Activated CD8-positive, alpha-beta T cell treated with anti-CD3 and anti-CD28 coated beads for 36 hours (primary cell): ENCODE measurements at regions of chr6 and their contacts with region 1.

Region 1: DNA sequence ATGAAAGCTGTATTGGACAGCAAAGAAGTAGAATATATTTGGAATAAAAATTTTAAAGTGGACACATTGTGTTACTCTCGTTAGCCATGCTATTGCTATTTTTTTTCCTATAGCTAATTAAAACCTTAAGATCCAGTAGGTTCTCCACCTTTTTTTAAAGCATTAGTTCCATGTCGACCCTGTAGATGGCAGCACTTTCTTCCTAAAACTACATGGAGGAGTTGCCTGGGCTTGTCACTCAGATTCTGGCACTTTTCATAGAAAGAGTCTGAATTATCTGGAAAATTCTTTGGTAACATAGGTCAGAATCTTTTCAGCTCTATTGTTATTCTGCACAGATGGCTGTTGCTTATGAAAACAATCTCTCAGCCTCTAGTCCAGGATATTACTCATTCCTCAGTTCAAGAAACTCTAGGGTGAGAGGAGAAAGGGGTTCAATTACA is 42.0 kb upstream of the ESR1 start:
- DNase-seq: peak; percentile 65
- ATAC-seq: peak; percentile 64
- H3K4me3 Mint-ChIP-seq: no peak overlapping the region
- H3K27ac Mint-ChIP-seq: no peak overlapping the region
- H3K4me1 Mint-ChIP-seq: peaks cover 10% of the 10 kb centered on the region
- H3K27me3 Mint-ChIP-seq: peaks cover 6% of the 10 kb centered on the region
- CTCF ChIP-seq: peak; percentile 63

Region 2: DNA sequence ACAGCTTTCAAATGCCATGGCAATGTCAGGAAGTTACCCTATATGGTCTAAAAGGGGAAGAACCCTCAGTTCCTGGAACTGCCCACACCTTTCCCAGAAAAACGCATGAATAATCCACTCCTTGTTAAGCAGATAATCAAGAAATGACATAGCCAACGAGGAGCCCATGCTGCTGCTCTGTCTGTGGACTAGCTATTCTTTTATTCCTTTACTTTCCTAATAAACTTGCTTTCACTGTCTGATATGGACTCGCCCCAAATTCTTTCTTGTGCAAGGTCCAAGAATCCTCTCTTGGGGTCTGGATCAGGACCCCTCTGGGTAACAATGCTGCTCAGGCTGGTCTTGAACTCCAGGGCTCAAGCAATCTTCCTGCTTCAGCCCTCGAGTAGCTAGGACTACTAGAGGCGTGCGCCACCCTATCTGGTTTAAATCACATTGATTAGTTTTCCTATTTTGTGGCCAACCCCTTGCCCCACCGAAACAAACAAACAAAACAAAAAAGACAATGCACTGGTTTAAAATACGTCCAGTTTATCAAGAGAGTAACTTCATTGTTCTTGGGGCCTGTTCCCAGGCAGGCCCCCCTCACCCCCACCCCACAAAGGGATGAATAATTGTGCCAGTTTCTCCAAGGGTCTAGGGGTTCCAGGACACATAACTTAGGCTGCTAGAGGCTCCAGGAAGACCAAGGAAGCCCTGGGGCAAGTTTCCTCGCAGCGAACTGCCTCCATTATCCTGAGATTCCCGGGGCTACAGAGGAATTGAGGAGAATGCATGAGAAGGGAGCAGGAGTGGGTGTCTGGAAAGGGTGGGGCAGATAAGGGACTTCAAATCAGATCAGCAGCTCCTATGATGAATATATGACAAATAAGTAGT is 535.8 kb before region 1 on chr6:
- CTCF ChIA-PET with region 1: no interaction called
- POLR2A ChIA-PET with region 1: no interaction called
- intact Hi-C with region 1: no loop called
- DNase-seq: peak; percentile 91
- ATAC-seq: peak; percentile 93
- H3K4me3 Mint-ChIP-seq: no peak overlapping the region
- H3K27ac Mint-ChIP-seq: no peak overlapping the region
- H3K4me1 Mint-ChIP-seq: peaks cover 13% of the 10 kb centered on the region
- H3K27me3 Mint-ChIP-seq: peaks cover 7% of the 10 kb centered on the region
- CTCF ChIP-seq: no peak

Region 3: GRCh38 chr6:151641028-151641427 is 124.4 kb before region 1 on chr6:
- CTCF ChIA-PET with region 1: no interaction called
- POLR2A ChIA-PET with region 1: no interaction called
- intact Hi-C with region 1: no loop called
- DNase-seq: no peak
- ATAC-seq: no peak
- H3K4me3 Mint-ChIP-seq: no peak overlapping the region
- H3K27ac Mint-ChIP-seq: no peak overlapping the region
- H3K4me1 Mint-ChIP-seq: peaks cover 5% of the 10 kb centered on the region
- H3K27me3 Mint-ChIP-seq: peaks cover 17% of the 10 kb centered on the region
- CTCF ChIP-seq: no peak

Region 4: DNA sequence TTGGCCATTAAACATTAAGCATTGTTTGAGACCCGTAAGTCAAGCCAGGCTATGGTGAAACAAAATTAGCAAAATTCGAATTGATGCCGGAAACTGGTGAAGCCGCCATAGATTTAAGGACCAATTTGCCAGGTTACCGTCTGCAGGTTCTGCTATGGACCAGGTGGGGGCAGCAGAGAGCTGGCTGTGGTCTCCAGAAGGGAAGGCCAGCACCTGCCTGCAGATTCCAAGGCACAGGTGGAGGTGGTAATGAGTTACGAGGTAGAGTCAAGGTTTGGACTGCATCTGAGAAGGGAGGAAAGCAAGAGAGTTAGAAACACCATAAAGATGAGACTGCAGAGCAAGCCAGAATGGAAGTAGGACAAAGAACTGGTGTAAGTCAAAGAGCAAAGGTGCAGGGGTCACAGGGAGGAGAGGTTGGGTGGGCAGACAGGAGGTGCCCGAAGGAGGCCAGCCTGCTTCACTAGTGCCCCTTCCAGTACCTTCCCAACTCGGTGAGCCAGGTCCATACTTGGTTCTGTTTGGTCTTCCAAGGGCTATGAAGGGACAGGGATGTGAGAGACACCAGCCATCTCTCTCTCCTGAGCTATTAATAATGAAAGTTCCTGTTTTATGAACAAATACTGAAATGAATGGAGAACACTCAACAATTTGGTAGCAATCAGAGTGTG is 89.6 kb before region 1 on chr6:
- CTCF ChIA-PET with region 1: interaction called, 10 read pairs
- POLR2A ChIA-PET with region 1: no interaction called
- intact Hi-C with region 1: loop called (anchors 5 kb)
- DNase-seq: peak; percentile 64
- ATAC-seq: peak; percentile 86
- H3K4me3 Mint-ChIP-seq: no peak overlapping the region
- H3K27ac Mint-ChIP-seq: no peak overlapping the region
- H3K4me1 Mint-ChIP-seq: peaks cover 7% of the 10 kb centered on the region
- H3K27me3 Mint-ChIP-seq: no peaks in the 10 kb centered on the region
- CTCF ChIP-seq: peak; percentile 93

Region 5: GRCh38 chr6:151681433-151682059 is 83.9 kb before region 1 on chr6:
- CTCF ChIA-PET with region 1: interaction called, 10 read pairs
- POLR2A ChIA-PET with region 1: no interaction called
- intact Hi-C with region 1: loop called (anchors 5 kb)
- DNase-seq: peak; percentile 43
- ATAC-seq: no peak
- H3K4me3 Mint-ChIP-seq: peak overlapping the region; percentile 17
- H3K27ac Mint-ChIP-seq: peak overlapping the region; percentile 49
- H3K4me1 Mint-ChIP-seq: peaks cover 18% of the 10 kb centered on the region
- H3K27me3 Mint-ChIP-seq: peaks cover 8% of the 10 kb centered on the region
- CTCF ChIP-seq: no peak

Region 6: GRCh38 chr6:151690768-151691562 is 74.5 kb before region 1 on chr6:
- CTCF ChIA-PET with region 1: interaction called, 18 read pairs
- POLR2A ChIA-PET with region 1: no interaction called
- intact Hi-C with region 1: no loop called
- DNase-seq: peak; percentile 64
- ATAC-seq: peak; percentile 91
- H3K4me3 Mint-ChIP-seq: peak overlapping the region; percentile 64
- H3K27ac Mint-ChIP-seq: peak overlapping the region; percentile 69
- H3K4me1 Mint-ChIP-seq: peaks cover 22% of the 10 kb centered on the region
- H3K27me3 Mint-ChIP-seq: no peaks in the 10 kb centered on the region
- CTCF ChIP-seq: no peak

Region 7: GRCh38 chr6:151729829-151730495 is 35.5 kb before region 1 on chr6:
- CTCF ChIA-PET with region 1: interaction called, 11 read pairs
- POLR2A ChIA-PET with region 1: no interaction called
- intact Hi-C with region 1: no loop called
- DNase-seq: no peak
- ATAC-seq: no peak
- H3K4me3 Mint-ChIP-seq: no peak overlapping the region
- H3K27ac Mint-ChIP-seq: no peak overlapping the region
- H3K4me1 Mint-ChIP-seq: peaks cover 6% of the 10 kb centered on the region
- H3K27me3 Mint-ChIP-seq: peaks cover 4% of the 10 kb centered on the region
- CTCF ChIP-seq: no peak

Region 8: GRCh38 chr6:152124429-152125074 is 359.1 kb after region 1 on chr6:
- CTCF ChIA-PET with region 1: interaction called, 49 read pairs
- POLR2A ChIA-PET with region 1: no interaction called
- intact Hi-C with region 1: loop called (anchors 5 kb)
- DNase-seq: no peak
- ATAC-seq: peak; percentile 45
- H3K4me3 Mint-ChIP-seq: no peak overlapping the region
- H3K27ac Mint-ChIP-seq: no peak overlapping the region
- H3K4me1 Mint-ChIP-seq: no peaks in the 10 kb centered on the region
- H3K27me3 Mint-ChIP-seq: no peaks in the 10 kb centered on the region
- CTCF ChIP-seq: peak; percentile 72

Region 9: GRCh38 chr6:152267967-152268845 is 502.7 kb after region 1 on chr6:
- CTCF ChIA-PET with region 1: interaction called, 10 read pairs
- POLR2A ChIA-PET with region 1: no interaction called
- intact Hi-C with region 1: loop called (anchors 5 kb)
- DNase-seq: peak; percentile 50
- ATAC-seq: no peak
- H3K4me3 Mint-ChIP-seq: no peak overlapping the region
- H3K27ac Mint-ChIP-seq: no peak overlapping the region
- H3K4me1 Mint-ChIP-seq: peaks cover 9% of the 10 kb centered on the region
- H3K27me3 Mint-ChIP-seq: no peaks in the 10 kb centered on the region
- CTCF ChIP-seq: peak; percentile 72